Kidney (tissue), 22 donors: ENCODE measurements at regions of chr13 and their contacts with region 1.

Region 1: DNA sequence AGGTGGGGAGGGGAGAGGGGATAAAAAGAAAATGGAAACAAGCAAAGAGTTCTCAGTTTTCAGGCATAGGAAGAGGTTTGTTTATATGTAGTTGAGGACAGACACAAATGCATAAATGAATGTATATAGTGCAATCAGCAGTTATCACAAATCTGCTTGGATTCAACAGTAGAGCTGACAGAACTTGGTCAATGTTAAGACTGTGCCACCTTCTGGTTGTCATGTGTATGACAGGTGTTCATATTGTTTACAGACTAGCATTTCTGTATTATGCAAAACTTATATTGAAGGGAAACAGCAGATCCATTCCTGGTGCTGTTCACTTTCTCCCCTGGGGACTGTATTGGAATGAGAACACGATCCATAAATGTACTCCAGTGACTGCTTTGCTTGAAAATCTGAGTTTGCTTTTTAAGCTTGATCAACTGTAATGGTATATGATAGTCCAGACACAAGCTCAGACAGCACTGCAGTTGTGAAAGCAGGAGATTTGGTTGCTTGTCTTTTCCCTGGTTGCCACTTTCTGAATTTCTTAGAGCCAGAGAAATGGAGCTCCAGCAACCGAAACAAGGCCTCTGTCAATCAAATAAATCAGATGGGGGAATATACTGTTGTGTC is 319.5 kb upstream of the OBI1 start:
- DNase-seq: peak in 3 of 5 donors; percentile 34 to 73 (median 65)
- H3K4me3 ChIP-seq: no peak overlapping the region
- H3K27ac ChIP-seq: no peak overlapping the region
- H3K4me1 ChIP-seq: no peaks in the 10 kb centered on the region
- H3K27me3 ChIP-seq: no peaks in the 10 kb centered on the region
- CTCF ChIP-seq: peak; percentile 69

Region 2: GRCh38 chr13:78147905-78148304 is 830.6 kb before region 1 on chr13:
- intact Hi-C with region 1: loop called (anchors 10 kb)
- DNase-seq: no peak
- H3K4me3 ChIP-seq: no peak overlapping the region
- H3K27ac ChIP-seq: no peak overlapping the region
- H3K4me1 ChIP-seq: no peaks in the 10 kb centered on the region
- H3K27me3 ChIP-seq: no peaks in the 10 kb centered on the region
- CTCF ChIP-seq: no peak

Region 3: GRCh38 chr13:79548902-79549301 is 570.4 kb after region 1 on chr13:
- intact Hi-C with region 1: no loop called
- DNase-seq: peak in 2 of 5 donors; percentile 58 to 66
- H3K4me3 ChIP-seq: no peak overlapping the region
- H3K27ac ChIP-seq: no peak overlapping the region
- H3K4me1 ChIP-seq: peaks cover 3 to 4% (median 3%) of the 10 kb centered on the region in 3 donors
- H3K27me3 ChIP-seq: no peaks in the 10 kb centered on the region
- CTCF ChIP-seq: no peak